Activated T-helper 1 cell treated with anti-CD3 and anti-CD28 coated beads, Interleukin-12 subunit alpha, Interleukin-12 subunit beta, Interleukin-2, Interleukin-4 antibody, amounts not matched to agents 30 ng/mL and 10 ng/mL and 1 ng/mL, durations not matched to agents 14 hours and 24 hours and 36 hours (primary cell): ENCODE measurements at regions of chr14 and their contacts with region 1.

Region 1: GRCh38 chr14:23555882-23556699 is at the start of gene THTPA:
- DNase-seq: peak; percentile 88
- H3K4me3 Mint-ChIP-seq: peak within 1 kb of the TSS; percentile 97
- H3K27ac Mint-ChIP-seq: peak within 1 kb of the TSS; percentile 97
- H3K4me1 Mint-ChIP-seq: peaks cover 31% of the 10 kb centered on the region
- H3K27me3 Mint-ChIP-seq: no peaks in the 10 kb centered on the region
- total RNA-seq, gene THTPA: 14.3 and 14.5 TPM in 2 replicates

Region 2: GRCh38 chr14:23469127-23469905 is 86.8 kb before region 1 on chr14 and contains the start of gene NGDN:
- intact Hi-C with region 1: loop called (anchors 1 kb)
- DNase-seq: peak; percentile 89
- H3K4me3 Mint-ChIP-seq: no peak within 1 kb of the TSS
- H3K27ac Mint-ChIP-seq: peak within 1 kb of the TSS; percentile 45
- H3K4me1 Mint-ChIP-seq: peaks cover 11% of the 10 kb centered on the region
- H3K27me3 Mint-ChIP-seq: peaks cover 2% of the 10 kb centered on the region
- total RNA-seq, gene NGDN: 80.1 and 84.5 TPM in 2 replicates

Region 3: GRCh38 chr14:23631702-23632460 is 75.8 kb after region 1 on chr14:
- intact Hi-C with region 1: no loop called
- DNase-seq: peak; percentile 53
- H3K4me3 Mint-ChIP-seq: peak overlapping the region; percentile 16
- H3K27ac Mint-ChIP-seq: no peak overlapping the region
- H3K4me1 Mint-ChIP-seq: peaks cover 16% of the 10 kb centered on the region
- H3K27me3 Mint-ChIP-seq: peaks cover 2% of the 10 kb centered on the region